Dendritic cell treated with granulocyte-macrophage colony-stimulating factor and Interleukin-4, amounts not matched to agents 40 ng/mL and 50 ng/mL, for 4 days (primary cell): ENCODE measurements at regions of chr2 and their contacts with region 1.

Region 1: GRCh38 chr2:106537047-106537446 is 49.9 kb downstream of the CD8B2 start:
- H3K4me3 Mint-ChIP-seq: peak overlapping the region; percentile 45
- H3K27ac Mint-ChIP-seq: peak overlapping the region; percentile 93
- H3K4me1 Mint-ChIP-seq: peaks cover 55% of the 10 kb centered on the region
- H3K27me3 Mint-ChIP-seq: peaks cover 23% of the 10 kb centered on the region

Region 2: DNA sequence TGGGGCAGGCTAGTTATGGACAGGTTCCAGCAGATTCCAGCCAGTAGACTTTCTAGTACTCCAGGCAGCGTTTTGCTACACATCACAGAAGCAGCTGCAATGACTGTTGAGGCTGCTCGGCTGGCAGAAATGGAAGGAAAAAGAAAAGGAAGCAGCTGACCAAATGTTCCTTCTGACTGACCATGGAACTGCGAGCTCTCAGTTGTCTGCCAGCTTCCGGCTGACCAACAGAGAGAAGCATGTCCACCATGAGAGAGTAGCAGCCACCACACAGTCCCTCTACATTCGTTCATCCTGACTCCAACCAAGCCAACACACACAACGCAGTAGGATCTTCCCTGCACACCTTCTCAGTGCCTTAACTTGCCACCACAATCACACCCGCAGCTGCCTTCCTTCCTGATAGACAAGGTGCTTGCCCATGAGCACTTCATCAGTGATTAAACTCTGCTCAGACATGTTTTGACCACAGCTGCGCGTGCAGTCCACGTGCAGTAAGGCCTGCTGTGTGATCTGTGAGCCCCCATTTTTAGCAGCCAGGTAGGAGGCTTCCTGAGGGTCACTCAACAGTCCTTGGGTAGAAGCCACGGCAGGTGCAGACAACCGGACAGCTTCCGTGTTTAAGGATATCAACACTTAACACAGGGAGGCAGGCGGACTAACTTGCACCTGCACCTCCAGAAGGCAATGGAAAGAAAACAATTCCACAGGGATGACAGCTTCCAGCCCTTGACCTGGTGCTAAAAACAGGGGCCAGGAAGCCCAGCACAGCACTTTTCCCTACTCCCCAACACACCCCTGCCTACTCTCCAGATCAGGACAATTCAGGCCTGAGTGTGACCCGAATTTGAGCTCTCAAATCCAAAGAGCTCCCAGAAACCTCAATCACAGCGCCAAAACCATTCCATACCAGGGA is 1208.5 kb before region 1 on chr2:
- intact Hi-C with region 1: no loop called
- H3K4me3 Mint-ChIP-seq: peak overlapping the region; percentile 76
- H3K27ac Mint-ChIP-seq: peak overlapping the region; percentile 69
- H3K4me1 Mint-ChIP-seq: peaks cover 53% of the 10 kb centered on the region
- H3K27me3 Mint-ChIP-seq: no peaks in the 10 kb centered on the region

Region 3: GRCh38 chr2:106104332-106105062 is 432.6 kb before region 1 on chr2:
- intact Hi-C with region 1: loop called (anchors 2 kb)
- H3K4me3 Mint-ChIP-seq: no peak overlapping the region
- H3K27ac Mint-ChIP-seq: no peak overlapping the region
- H3K4me1 Mint-ChIP-seq: no peaks in the 10 kb centered on the region
- H3K27me3 Mint-ChIP-seq: no peaks in the 10 kb centered on the region

Region 4: DNA sequence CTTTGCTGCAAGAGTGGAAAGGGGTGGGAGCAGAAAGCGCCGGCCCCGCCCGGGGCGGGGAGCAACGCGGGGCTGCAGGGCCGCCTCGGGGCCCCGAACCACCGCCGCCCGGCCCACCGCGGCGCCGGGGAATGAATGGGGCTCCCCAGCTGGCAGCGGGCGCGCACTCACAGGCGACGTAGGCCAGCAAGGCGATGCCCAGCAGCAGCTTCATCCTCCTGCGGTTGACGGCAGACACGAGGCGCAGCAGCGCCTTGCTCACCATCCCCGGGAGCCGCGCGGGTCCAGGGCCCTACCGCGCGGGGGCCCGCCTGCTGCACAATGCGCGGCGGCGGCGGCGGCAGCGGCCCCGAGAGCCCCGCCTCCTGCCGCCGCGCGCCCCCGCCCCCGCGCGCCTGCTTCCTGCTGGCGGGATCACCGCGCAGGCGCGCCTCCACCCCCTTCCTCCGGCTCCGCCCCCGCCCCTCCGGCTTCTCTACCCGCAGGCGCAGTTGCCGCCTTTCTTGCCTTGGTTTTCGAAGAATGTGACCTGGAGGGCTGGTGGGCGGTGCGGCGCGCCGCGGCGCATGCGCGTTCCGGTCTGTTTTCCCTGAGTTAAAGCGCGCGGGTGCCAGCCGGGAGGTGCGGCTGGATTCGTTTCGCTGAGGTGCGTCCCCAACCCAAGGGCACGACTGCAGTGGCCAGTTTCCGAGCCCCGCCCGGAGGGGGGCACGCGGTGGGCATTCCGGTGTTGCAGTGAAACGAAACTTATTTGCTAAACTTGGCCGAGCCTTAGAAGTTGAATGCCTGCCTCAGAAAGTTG is 342.9 kb before region 1 on chr2 and contains the start of gene UXS1:
- intact Hi-C with region 1: loop called (anchors 5 kb)
- H3K4me3 Mint-ChIP-seq: peak within 1 kb of the TSS; percentile 87
- H3K27ac Mint-ChIP-seq: peak within 1 kb of the TSS; percentile 88
- H3K4me1 Mint-ChIP-seq: peaks cover 47% of the 10 kb centered on the region
- H3K27me3 Mint-ChIP-seq: no peaks in the 10 kb centered on the region